Ascending aorta (tissue), 2 donors: ENCODE measurements at regions of chr4 and their contacts with region 1.

Region 1: DNA sequence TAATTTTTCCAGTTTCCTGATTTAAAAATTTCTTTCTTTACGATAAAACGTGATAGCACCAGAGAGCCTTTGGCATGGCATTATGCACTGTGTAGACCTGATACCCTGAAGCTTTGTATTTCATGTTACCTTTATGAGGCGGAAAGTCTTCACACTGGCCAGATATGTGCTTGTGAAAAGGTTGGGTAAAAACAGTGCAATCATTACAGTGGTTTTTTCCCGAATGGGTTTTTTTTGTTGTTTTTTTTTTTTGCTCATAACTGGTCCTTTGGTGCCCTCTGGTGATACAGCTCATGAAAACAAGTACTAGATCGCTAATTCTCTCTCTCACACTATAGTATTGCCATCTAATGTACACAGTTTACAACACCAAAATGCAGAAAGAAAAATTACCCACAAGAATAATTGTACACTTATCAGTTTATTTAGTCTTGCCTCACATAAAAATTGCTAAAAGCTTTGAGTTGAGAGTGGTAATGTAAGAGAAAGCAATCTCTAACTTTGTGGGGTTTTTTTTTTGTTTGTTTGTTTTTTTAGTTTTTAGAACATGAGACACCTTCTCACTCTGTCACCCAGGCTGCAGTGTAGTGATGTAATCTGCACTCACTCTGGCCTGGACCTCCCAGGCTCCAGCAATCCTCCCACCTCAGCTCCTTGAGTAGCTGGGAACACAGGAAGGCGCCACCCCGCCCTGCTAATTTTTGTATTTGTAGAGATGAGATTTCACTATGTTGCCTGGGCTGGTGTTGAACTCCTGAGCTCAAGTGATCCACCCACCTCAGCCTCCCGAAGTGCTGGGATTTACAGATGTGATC is 21.3 kb downstream of the SPCS3 start:
- DNase-seq: no peak
- H3K4me3 ChIP-seq: peak overlapping the region in 1 of 2 donors; percentile 25
- H3K27ac ChIP-seq: no peak overlapping the region
- H3K4me1 ChIP-seq: peaks cover 0 to 2% of the 10 kb centered on the region in 2 donors
- H3K27me3 ChIP-seq: no peaks in the 10 kb centered on the region
- CTCF ChIP-seq: peak; percentile 9 to 57 (median 52)

Region 2: DNA sequence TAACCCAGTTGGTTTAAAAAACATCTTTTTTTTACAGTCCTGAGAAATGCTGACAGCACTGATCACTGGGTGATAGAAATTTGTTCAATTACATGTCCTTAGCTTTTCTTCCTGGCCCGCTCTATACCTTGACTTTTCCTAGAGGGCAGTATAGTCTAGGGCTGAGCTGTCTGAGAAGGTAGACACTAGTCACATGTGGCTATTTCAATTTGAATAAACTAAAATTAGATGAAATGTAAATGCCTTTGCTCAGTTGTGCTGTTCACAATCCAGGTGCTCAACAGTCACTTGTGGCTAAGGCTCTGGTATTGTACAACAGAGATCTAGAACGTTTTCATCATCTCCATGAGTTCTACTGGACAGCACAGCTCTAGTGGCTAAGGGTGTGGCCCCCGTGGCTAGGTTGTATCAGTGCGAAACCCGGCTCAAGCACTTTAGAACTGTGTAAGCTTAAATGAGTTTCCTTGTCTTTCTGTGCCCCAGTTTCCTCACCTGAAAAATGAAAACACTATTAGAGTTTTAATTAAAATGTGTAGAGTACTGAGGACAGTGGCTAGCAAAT is 387.0 kb before region 1 on chr4:
- intact Hi-C with region 1: loop called (anchors 5 kb)
- DNase-seq: no peak
- H3K4me3 ChIP-seq: no peak overlapping the region
- H3K27ac ChIP-seq: no peak overlapping the region
- H3K4me1 ChIP-seq: no peaks in the 10 kb centered on the region
- H3K27me3 ChIP-seq: no peaks in the 10 kb centered on the region
- CTCF ChIP-seq: no peak

Region 3: GRCh38 chr4:176034499-176034898 is 306.6 kb before region 1 on chr4:
- intact Hi-C with region 1: loop called (anchors 1 kb)
- DNase-seq: no peak
- H3K4me3 ChIP-seq: no peak overlapping the region
- H3K27ac ChIP-seq: no peak overlapping the region
- H3K4me1 ChIP-seq: no peaks in the 10 kb centered on the region
- H3K27me3 ChIP-seq: no peaks in the 10 kb centered on the region
- CTCF ChIP-seq: peak; percentile 12 to 53 (median 35)

Region 4: GRCh38 chr4:176150356-176150682 is 190.8 kb before region 1 on chr4:
- intact Hi-C with region 1: loop called (anchors 1 kb)
- DNase-seq: no peak
- H3K4me3 ChIP-seq: no peak overlapping the region
- H3K27ac ChIP-seq: no peak overlapping the region
- H3K4me1 ChIP-seq: no peaks in the 10 kb centered on the region
- H3K27me3 ChIP-seq: no peaks in the 10 kb centered on the region
- CTCF ChIP-seq: peak in 1 of 3 experiments; percentile 54

Region 5: GRCh38 chr4:176270669-176271068 is 70.4 kb before region 1 on chr4:
- intact Hi-C with region 1: no loop called
- DNase-seq: no peak
- H3K4me3 ChIP-seq: no peak overlapping the region
- H3K27ac ChIP-seq: no peak overlapping the region
- H3K4me1 ChIP-seq: no peaks in the 10 kb centered on the region
- H3K27me3 ChIP-seq: no peaks in the 10 kb centered on the region
- CTCF ChIP-seq: no peak